ENCODE measurements at regions of chr16 and their contacts with region 1.

Region 1: GRCh38 chr16:75110637-75111513 is 5.7 kb downstream of the LDHD start:
- DNase-seq: peak; percentile 88 to 94 (median 91)
- ATAC-seq: peak; percentile 39 to 65 (median 58)
- H3K4me3 ChIP-seq: peak overlapping the region in 9 of 12 donors; percentile 11 to 43 (median 34)
- H3K27ac ChIP-seq: peak overlapping the region in 11 of 12 donors; percentile 77 to 98 (median 91)
- H3K4me1 ChIP-seq: peaks cover 6 to 92% (median 56%) of the 10 kb centered on the region in 12 donors
- H3K27me3 ChIP-seq: peaks cover 0 to 8% (median 0%) of the 10 kb centered on the region in 9 donors
- CTCF ChIP-seq: peak; percentile 85 to 97 (median 93)
- POLR2A ChIP-seq: no peak

Region 2: DNA sequence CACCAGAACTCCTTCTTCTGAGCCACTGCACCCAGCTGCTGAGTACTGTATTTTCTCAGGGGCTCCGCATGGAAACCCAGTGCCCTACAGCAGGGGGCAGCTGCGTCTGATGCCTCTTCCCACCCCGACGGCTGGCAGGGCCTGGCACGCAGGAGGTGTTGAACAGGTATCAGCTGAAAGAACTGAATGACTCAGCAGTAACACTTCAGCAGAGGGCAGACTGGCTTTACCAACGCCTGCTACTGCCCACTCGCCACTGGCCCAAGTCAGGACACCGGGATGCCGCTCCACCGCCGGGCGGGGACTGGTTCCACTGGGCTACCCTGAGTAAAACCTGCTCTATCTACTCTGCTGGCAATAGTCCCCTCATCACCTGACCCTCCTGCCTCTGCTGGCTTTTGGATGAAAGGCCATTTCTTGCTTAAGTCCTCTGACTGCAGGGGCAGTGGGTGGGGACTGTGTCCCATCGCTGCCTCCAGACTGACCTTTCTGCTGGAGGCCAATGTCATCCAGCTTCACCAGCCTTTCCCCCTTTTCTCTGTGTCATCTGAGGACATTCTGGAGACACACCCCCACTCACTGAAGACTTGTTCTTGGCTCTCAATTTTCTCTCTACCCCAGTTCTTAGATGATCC is 235.8 kb before region 1 on chr16:
- intact Hi-C with region 1: loop called in 6 of 10 experiments (anchors 5 to 10 kb)
- DNase-seq: peak in 3 of 5 donors; percentile 26 to 48 (median 37)
- ATAC-seq: peak; percentile 45 to 87 (median 84)
- H3K4me3 ChIP-seq: no peak overlapping the region
- H3K27ac ChIP-seq: peak overlapping the region in 4 of 12 donors; percentile 2 to 49 (median 20)
- H3K4me1 ChIP-seq: peaks cover 0 to 8% (median 0%) of the 10 kb centered on the region in 12 donors
- H3K27me3 ChIP-seq: no peaks in the 10 kb centered on the region
- CTCF ChIP-seq: peak in 4 of 12 donors; percentile 7 to 29 (median 13)
- POLR2A ChIP-seq: no peak

Region 3: DNA sequence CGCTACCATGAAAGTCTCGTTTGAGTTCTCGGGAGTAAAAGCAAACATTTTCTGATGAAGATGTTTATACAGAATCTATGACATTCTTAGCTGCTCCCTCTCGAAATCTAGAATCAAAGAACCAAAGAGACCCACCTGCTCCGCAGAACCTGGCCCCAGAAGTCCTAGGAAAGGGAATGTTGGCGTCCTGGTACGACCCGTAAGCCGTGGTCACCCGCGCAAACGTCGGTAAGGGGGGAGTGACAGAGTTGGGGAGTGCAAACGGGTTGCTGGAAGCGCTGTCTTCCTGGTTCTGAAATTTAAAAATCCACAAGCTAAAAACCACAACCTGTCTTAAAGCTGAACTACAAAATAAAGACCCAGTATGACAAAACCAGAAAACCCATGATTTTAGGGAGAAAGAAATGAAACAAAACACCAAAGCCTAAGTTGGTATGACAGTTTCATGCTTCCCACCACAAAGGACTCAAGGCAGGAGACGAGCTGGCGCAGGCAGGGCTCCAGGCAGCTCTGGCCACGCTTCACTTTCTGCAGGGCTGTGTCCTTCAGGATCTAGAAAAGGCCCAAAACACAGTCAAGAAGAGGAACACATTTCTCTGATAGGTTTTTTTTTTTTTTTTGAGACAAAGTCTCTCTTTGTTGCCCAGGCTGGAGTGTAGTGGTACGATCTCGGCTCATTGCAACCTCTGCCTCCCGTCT is 201.4 kb before region 1 on chr16:
- intact Hi-C with region 1: loop called in 2 of 10 experiments (anchors 10 kb)
- DNase-seq: no peak
- ATAC-seq: no peak
- H3K4me3 ChIP-seq: no peak overlapping the region
- H3K27ac ChIP-seq: no peak overlapping the region
- H3K4me1 ChIP-seq: no peaks in the 10 kb centered on the region
- H3K27me3 ChIP-seq: no peaks in the 10 kb centered on the region
- CTCF ChIP-seq: no peak
- POLR2A ChIP-seq: no peak

Region 4: GRCh38 chr16:75043175-75043895 is 67.5 kb before region 1 on chr16:
- intact Hi-C with region 1: loop called in 3 of 10 experiments (anchors 5 to 10 kb)
- DNase-seq: no peak
- ATAC-seq: peak in 3 of 4 donors; percentile 5 to 11 (median 10)
- H3K4me3 ChIP-seq: no peak overlapping the region
- H3K27ac ChIP-seq: peak overlapping the region; percentile 7 to 91 (median 67)
- H3K4me1 ChIP-seq: peaks cover 0 to 75% (median 55%) of the 10 kb centered on the region in 12 donors
- H3K27me3 ChIP-seq: no peaks in the 10 kb centered on the region
- CTCF ChIP-seq: no peak
- POLR2A ChIP-seq: no peak

Region 5: GRCh38 chr16:75087375-75087979 is 23.4 kb before region 1 on chr16:
- intact Hi-C with region 1: loop called in 1 of 10 experiments (anchors 1 kb)
- DNase-seq: peak; percentile 55 to 71 (median 60)
- ATAC-seq: peak; percentile 86 to 93 (median 90)
- H3K4me3 ChIP-seq: peak overlapping the region in 8 of 12 donors; percentile 8 to 32 (median 23)
- H3K27ac ChIP-seq: peak overlapping the region; percentile 25 to 78 (median 68)
- H3K4me1 ChIP-seq: peaks cover 5 to 46% (median 31%) of the 10 kb centered on the region in 12 donors
- H3K27me3 ChIP-seq: no peaks in the 10 kb centered on the region
- CTCF ChIP-seq: peak in 3 of 12 donors; percentile 10 to 16 (median 12)
- POLR2A ChIP-seq: no peak

Measured in heart left ventricle (tissue), 16 donors.